Activated CD4-positive, alpha-beta memory T cell treated with anti-CD3 and anti-CD28 coated beads for 36 hours (primary cell): ENCODE measurements at regions of chr1 and their contacts with region 1.

Region 1: DNA sequence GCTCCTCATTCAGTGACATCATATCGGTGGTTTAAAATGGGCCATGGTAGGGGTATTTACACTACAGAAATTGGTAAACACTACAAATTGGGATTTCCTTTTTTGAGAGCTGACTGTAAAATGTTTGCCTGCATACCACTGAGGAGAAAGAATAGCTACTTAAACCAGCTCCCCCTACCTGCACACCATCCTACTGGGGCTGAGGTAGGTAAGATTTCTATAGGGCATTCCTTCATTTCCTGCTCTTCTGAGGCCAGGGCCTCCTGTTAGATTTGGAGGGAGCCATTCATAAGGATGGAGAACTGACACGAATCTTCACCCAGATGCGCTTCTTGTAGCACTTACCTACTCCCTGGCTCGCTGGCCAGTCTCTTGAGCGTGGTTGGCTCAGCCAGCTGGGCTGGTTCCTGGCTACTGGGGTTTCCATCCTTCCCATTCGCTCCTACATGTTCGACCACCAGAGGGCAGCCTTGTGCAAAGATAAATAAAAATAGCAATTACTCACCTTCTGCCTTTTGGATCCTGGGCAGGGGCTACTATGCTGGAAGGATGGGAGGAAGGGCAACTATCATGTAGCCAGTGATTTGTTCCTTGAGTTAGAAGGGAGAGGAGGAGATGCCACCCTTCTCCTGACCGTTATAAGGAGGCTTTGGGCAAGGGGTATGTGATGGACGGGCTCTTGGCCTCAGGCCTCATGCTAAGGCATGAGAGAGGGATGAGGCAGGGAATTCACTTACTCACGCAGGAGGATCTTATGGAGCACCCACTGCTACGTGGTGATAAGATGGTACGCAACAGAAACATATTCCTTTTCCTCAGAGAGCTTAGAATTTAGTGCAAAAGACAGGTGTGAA is 10.7 kb downstream of the OPTC start:
- DNase-seq: peak; percentile 84
- H3K4me3 Mint-ChIP-seq: no peak overlapping the region
- H3K27ac Mint-ChIP-seq: no peak overlapping the region
- H3K4me1 Mint-ChIP-seq: no peaks in the 10 kb centered on the region
- H3K27me3 Mint-ChIP-seq: peaks cover 2% of the 10 kb centered on the region

Region 2: DNA sequence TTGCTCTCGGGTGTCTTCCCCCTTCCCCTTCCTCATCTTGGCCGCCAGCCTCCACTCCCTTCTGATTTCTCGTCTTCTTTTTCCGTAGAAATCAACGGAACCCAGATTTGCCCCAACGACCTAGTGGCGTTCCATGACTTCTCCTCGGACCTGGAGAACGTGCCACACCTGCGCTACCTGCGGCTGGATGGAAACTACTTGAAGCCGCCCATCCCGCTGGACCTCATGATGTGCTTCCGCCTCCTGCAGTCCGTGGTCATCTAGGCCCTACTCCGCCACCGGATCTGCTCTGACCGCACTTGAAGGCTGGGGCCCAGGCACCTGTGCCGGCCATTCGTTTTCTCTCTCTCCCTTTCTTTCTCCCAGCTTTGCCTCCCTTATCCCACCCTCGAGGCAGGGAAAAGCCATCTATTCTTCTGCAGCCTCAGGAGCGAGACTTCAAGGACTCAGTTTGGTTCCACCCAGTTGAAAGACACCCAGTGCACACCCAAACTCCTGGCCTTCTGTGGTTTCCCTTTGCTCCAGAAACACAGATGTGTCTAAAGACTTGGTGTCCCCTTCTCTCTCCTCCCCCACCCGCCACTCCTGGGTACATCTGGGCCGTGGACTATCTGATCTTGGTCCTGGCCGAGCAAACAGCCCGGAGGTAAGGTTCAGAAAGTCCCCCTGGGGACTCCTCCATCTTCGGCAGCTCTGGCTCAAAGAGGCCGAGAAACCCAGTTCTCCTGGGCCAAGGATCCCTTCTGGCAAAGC is 17.8 kb before region 1 on chr1:
- CTCF ChIA-PET with region 1: interaction called, 16 read pairs
- POLR2A ChIA-PET with region 1: no interaction called
- intact Hi-C with region 1: no loop called
- DNase-seq: no peak
- H3K4me3 Mint-ChIP-seq: peak overlapping the region; percentile 67
- H3K27ac Mint-ChIP-seq: no peak overlapping the region
- H3K4me1 Mint-ChIP-seq: peaks cover 9% of the 10 kb centered on the region
- H3K27me3 Mint-ChIP-seq: no peaks in the 10 kb centered on the region

Region 3: GRCh38 chr1:203536981-203537455 is 32.4 kb after region 1 on chr1:
- CTCF ChIA-PET with region 1: no interaction called
- POLR2A ChIA-PET with region 1: no interaction called
- intact Hi-C with region 1: no loop called
- DNase-seq: no peak
- H3K4me3 Mint-ChIP-seq: no peak overlapping the region
- H3K27ac Mint-ChIP-seq: no peak overlapping the region
- H3K4me1 Mint-ChIP-seq: no peaks in the 10 kb centered on the region
- H3K27me3 Mint-ChIP-seq: no peaks in the 10 kb centered on the region

Region 4: DNA sequence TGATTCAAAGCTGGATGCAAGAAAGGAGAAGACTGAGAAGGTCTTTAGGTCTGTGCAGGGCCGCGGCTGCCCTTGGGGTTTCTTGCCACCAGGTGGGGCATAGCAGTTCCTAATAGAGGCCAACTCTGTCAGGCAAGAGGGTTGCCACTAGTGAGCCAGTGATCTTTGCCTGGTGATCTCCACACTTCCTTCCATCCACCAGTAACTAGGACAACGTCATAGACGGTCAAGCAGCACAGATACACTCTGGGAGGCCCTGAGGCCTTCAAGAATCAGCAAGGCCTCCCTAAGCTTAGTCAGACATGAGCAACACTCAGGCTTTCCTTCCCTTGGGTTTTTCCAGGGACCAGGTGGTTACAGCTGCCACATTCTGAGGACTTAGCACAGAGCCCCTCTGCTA is 89.1 kb after region 1 on chr1:
- CTCF ChIA-PET with region 1: interaction called, 14 read pairs
- POLR2A ChIA-PET with region 1: no interaction called
- intact Hi-C with region 1: loop called (anchors 5 kb)
- DNase-seq: peak; percentile 76
- H3K4me3 Mint-ChIP-seq: no peak overlapping the region
- H3K27ac Mint-ChIP-seq: peak overlapping the region; percentile 4
- H3K4me1 Mint-ChIP-seq: peaks cover 15% of the 10 kb centered on the region
- H3K27me3 Mint-ChIP-seq: no peaks in the 10 kb centered on the region

Region 5: DNA sequence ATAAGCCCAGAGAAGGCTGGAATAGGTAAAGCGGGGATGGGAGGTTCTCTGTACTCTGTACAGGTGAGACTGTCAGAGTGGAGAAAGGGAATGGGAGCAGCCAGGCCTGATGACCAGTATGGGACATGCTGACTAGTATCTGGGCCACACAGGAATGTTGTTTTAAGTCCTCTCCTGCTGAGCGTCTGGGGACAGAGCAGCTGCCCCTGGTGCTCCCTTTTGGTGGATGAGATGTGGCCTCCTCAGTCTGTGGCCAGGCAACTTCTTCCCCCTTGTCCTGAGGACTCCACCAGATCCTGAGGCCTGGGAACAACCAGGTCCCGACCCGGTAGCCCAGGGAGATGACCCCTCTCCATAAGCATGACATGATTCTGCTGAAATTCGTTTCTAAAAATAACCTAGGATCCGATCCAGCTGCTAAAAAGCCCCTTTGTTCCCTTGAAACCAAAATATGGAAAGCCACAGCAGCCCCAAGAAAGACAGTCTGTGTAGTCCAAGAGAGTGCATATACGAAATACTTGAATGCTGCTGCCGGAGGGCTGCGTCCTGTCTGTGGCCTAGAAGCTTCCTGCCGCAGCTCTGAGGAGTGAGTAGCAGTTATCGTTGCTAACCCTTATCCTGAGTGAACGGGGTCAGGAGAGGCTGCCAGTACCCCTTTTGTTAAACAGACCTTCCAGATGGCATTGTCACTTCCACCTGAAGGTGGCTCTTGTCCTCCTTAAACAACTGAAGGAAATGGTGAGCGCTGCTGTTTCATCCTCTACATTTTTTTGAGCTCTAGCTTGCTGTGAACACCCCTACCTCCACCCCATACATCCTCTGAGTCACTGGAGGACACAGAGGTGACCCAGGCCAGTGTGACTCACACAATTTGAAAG is 169.2 kb after region 1 on chr1:
- CTCF ChIA-PET with region 1: interaction called, 11 read pairs
- POLR2A ChIA-PET with region 1: no interaction called
- intact Hi-C with region 1: no loop called
- DNase-seq: peak; percentile 84
- H3K4me3 Mint-ChIP-seq: peak overlapping the region; percentile 46
- H3K27ac Mint-ChIP-seq: peak overlapping the region; percentile 90
- H3K4me1 Mint-ChIP-seq: peaks cover 62% of the 10 kb centered on the region
- H3K27me3 Mint-ChIP-seq: no peaks in the 10 kb centered on the region

Region 6: GRCh38 chr1:203682473-203683383 is 178.1 kb after region 1 on chr1:
- CTCF ChIA-PET with region 1: interaction called, 12 read pairs
- POLR2A ChIA-PET with region 1: no interaction called
- intact Hi-C with region 1: no loop called
- DNase-seq: peak; percentile 78
- H3K4me3 Mint-ChIP-seq: peak overlapping the region; percentile 24
- H3K27ac Mint-ChIP-seq: peak overlapping the region; percentile 89
- H3K4me1 Mint-ChIP-seq: peaks cover 50% of the 10 kb centered on the region
- H3K27me3 Mint-ChIP-seq: no peaks in the 10 kb centered on the region

Region 7: GRCh38 chr1:203711251-203712007 is 206.8 kb after region 1 on chr1:
- CTCF ChIA-PET with region 1: interaction called, 10 read pairs
- POLR2A ChIA-PET with region 1: no interaction called
- intact Hi-C with region 1: no loop called
- DNase-seq: peak; percentile 37
- H3K4me3 Mint-ChIP-seq: no peak overlapping the region
- H3K27ac Mint-ChIP-seq: peak overlapping the region; percentile 57
- H3K4me1 Mint-ChIP-seq: peaks cover 11% of the 10 kb centered on the region
- H3K27me3 Mint-ChIP-seq: no peaks in the 10 kb centered on the region